Mammary epithelial cell (primary cell): ENCODE measurements at regions of chr16 and their contacts with region 1.

Region 1: DNA sequence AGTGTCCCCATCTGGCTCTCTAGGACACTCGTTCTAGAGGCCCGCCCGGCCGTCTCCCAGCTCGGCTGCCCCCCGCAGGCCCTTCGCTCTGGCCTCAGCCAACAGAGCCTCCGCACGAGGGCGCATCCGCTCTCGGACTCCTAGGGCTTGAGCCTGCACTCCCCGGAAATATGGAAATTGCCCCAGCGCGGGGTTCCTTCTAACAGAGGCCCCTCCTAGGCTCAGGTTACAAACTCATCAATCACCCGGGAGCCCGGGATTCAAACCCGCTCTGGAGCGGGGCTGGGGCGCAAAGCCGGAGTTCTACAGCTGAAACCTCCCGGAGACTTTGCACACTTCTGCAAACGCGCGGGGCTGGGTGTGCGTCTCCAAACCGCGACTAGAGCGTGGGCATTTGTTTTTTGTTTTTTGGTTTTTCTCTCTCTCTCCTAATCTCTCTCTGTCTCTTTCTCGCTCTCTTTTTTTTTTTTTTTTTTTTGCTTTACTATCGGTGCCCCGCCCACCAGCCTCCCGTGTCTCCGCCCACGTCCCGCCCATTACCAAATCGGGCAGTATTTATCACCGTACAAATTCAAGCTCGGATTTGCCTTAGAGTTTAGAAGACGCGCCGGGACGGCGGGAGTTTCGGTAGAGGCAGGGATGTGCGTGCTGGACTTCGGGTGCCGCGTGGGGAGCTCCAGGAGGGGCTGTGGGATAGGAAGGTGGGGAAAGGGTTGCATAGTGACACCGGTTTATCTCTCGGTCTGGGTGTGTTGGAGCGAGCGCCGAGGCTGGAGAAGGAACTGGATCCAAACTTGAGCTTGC is 2.4 kb upstream of the FOXL1 start:
- DNase-seq: peak; percentile 92
- H3K4me3 ChIP-seq: peak overlapping the region; percentile 54 to 67 (median 62)
- H3K27ac ChIP-seq: peak overlapping the region; percentile 68
- H3K4me1 ChIP-seq: peaks cover 22% of the 10 kb centered on the region
- H3K27me3 ChIP-seq: no peaks in the 10 kb centered on the region
- CTCF ChIP-seq: peak in 1 of 2 donors; percentile 60

Region 2: GRCh38 chr16:86151239-86151851 is 424.6 kb before region 1 on chr16:
- CTCF ChIA-PET with region 1: no interaction called
- dilution Hi-C with region 1: no loop called
- in situ Hi-C with region 1: no loop called
- intact Hi-C with region 1: no loop called
- DNase-seq: no peak
- H3K4me3 ChIP-seq: no peak overlapping the region
- H3K27ac ChIP-seq: no peak overlapping the region
- H3K4me1 ChIP-seq: no peaks in the 10 kb centered on the region
- H3K27me3 ChIP-seq: no peaks in the 10 kb centered on the region
- CTCF ChIP-seq: no peak

Region 3: GRCh38 chr16:86531191-86531545 is 44.8 kb before region 1 on chr16:
- CTCF ChIA-PET with region 1: no interaction called
- dilution Hi-C with region 1: no loop called
- in situ Hi-C with region 1: no loop called
- intact Hi-C with region 1: no loop called
- DNase-seq: no peak
- H3K4me3 ChIP-seq: no peak overlapping the region
- H3K27ac ChIP-seq: no peak overlapping the region
- H3K4me1 ChIP-seq: no peaks in the 10 kb centered on the region
- H3K27me3 ChIP-seq: no peaks in the 10 kb centered on the region
- CTCF ChIP-seq: no peak

Region 4: GRCh38 chr16:86664533-86665318 is 88.8 kb after region 1 on chr16:
- CTCF ChIA-PET with region 1: no interaction called
- dilution Hi-C with region 1: no loop called
- in situ Hi-C with region 1: no loop called
- intact Hi-C with region 1: loop called (anchors 2 kb)
- DNase-seq: peak; percentile 99
- H3K4me3 ChIP-seq: peak overlapping the region in 1 of 3 experiments; percentile 23
- H3K27ac ChIP-seq: peak overlapping the region; percentile 96
- H3K4me1 ChIP-seq: peaks cover 28% of the 10 kb centered on the region
- H3K27me3 ChIP-seq: no peaks in the 10 kb centered on the region
- CTCF ChIP-seq: no peak

Region 5: DNA sequence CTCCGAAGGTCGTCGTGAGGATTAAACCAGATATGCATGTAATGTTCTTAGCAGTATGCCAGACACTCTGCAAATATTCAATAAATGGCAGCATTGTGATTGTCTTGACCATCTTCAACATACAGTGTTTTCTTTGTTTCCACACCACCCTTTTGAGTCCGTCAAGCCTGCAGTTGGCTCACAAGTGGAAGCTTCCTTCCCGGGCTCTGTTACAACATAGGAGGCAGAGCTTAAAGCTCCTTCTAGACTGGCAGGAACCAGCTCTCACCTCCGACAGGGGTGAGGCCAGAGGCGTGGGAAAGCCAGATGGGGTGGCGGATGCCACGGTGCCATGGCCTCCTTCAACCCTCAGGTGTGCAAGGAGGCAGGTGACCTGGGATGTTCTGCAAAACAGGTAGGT is 140.7 kb after region 1 on chr16:
- CTCF ChIA-PET with region 1: interaction called, 19 read pairs
- dilution Hi-C with region 1: no loop called
- in situ Hi-C with region 1: no loop called
- intact Hi-C with region 1: no loop called
- DNase-seq: peak; percentile 57
- H3K4me3 ChIP-seq: no peak overlapping the region
- H3K27ac ChIP-seq: no peak overlapping the region
- H3K4me1 ChIP-seq: peaks cover 20% of the 10 kb centered on the region
- H3K27me3 ChIP-seq: no peaks in the 10 kb centered on the region
- CTCF ChIP-seq: no peak

Region 6: DNA sequence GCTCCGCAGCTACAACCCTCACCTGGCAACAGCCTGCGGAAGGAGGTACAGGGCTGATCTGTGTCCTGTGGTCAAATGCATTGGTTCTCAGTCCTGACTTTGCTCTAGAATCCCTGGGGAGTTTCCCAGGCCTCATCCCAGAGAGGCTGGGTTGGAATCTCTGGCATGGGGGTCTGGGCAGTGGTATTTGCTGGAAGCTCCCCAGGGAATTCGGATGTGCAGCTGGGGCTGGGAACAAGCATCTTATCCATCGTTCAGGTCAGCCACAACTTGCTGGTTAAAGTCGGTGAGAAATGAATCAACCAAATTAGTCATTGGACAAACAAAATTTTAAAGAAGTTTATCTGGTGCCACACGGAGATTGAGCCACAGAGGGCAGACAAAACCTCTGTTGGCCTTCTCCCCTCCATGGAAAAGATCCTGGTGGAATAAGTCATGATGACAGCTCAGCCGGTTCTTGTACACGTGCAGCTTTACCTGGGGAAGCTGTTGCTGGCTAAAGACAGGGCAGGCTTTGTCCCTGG is 233.6 kb after region 1 on chr16:
- CTCF ChIA-PET with region 1: no interaction called
- dilution Hi-C with region 1: no loop called
- in situ Hi-C with region 1: loop called in 1 of 2 experiments (anchors 25 kb)
- intact Hi-C with region 1: loop called (anchors 1 kb)
- DNase-seq: peak; percentile 92
- H3K4me3 ChIP-seq: no peak overlapping the region
- H3K27ac ChIP-seq: no peak overlapping the region
- H3K4me1 ChIP-seq: peaks cover 25% of the 10 kb centered on the region
- H3K27me3 ChIP-seq: peaks cover 2% of the 10 kb centered on the region
- CTCF ChIP-seq: peak; percentile 23 to 49

Region 7: GRCh38 chr16:86834451-86835035 is 258.6 kb after region 1 on chr16:
- CTCF ChIA-PET with region 1: no interaction called
- dilution Hi-C with region 1: no loop called
- in situ Hi-C with region 1: no loop called
- intact Hi-C with region 1: no loop called
- DNase-seq: no peak
- H3K4me3 ChIP-seq: no peak overlapping the region
- H3K27ac ChIP-seq: no peak overlapping the region
- H3K4me1 ChIP-seq: peaks cover 10% of the 10 kb centered on the region
- H3K27me3 ChIP-seq: no peaks in the 10 kb centered on the region
- CTCF ChIP-seq: peak in 1 of 2 donors; percentile 14

Region 8: DNA sequence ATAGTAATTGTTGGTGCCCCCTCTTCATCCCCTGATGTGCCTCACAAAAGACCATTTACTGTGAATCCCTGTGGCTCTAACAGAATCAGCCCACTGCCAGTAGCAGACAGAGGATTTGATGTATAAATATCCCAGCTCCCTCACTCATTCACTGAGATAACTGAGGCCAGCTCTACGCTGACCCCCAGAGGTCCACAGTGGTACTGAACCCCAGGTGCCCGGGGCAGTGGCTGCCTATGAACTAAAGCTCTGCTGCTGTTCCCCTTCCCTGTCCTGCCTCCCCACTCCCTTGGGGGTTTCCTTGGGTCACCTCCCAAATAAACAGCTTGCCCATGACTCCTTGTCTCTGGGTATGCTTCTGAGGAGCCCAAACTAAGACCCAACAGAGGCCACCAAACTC is 298.2 kb after region 1 on chr16:
- CTCF ChIA-PET with region 1: interaction called, 4 read pairs
- dilution Hi-C with region 1: no loop called
- in situ Hi-C with region 1: no loop called
- intact Hi-C with region 1: loop called (anchors 1 kb)
- DNase-seq: peak; percentile 20
- H3K4me3 ChIP-seq: no peak overlapping the region
- H3K27ac ChIP-seq: no peak overlapping the region
- H3K4me1 ChIP-seq: no peaks in the 10 kb centered on the region
- H3K27me3 ChIP-seq: no peaks in the 10 kb centered on the region
- CTCF ChIP-seq: peak; percentile 65 to 68

Region 9: DNA sequence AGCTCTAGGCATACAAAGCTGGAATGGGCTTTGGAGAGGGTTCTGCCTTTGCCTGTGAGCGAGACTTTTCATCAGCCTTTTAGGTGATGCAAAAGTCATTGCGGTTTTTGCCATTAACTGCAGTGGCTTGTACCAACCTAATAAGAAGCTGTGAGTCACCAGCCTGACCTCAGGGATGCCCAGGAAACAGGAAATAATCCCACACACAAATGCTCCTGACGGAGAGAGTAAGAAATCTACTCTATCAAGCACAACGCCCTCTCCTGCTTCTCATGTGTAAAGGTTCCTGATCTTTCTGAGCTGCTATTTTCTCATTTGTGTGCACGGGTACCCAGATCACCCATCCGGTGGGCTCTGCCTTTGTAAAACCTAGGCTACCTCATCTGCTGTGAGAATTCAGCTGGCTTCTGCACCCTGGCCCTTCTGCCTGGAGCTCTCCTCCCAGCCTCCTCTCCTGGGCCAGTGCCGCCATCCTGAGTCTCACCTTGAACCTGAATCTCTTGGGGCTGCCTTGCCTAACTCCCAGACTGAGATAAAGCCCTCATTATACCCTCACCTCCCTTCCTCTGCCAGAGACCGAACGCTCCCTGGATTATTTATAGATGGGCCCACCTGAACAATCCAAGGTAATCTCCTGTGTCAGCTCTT is 441.5 kb after region 1 on chr16:
- CTCF ChIA-PET with region 1: interaction called, 3 read pairs
- dilution Hi-C with region 1: no loop called
- in situ Hi-C with region 1: no loop called
- intact Hi-C with region 1: loop called (anchors 1 kb)
- DNase-seq: peak; percentile 94
- H3K4me3 ChIP-seq: no peak overlapping the region
- H3K27ac ChIP-seq: no peak overlapping the region
- H3K4me1 ChIP-seq: peaks cover 9% of the 10 kb centered on the region
- H3K27me3 ChIP-seq: no peaks in the 10 kb centered on the region
- CTCF ChIP-seq: peak; percentile 36 to 45